ENCODE measurements at regions of chr17 and their contacts with region 1.

Region 1: GRCh38 chr17:57313097-57313835 is 56.9 kb downstream of the MSI2 start:
- DNase-seq: no peak
- ATAC-seq: no peak
- H3K4me3 ChIP-seq: no peak overlapping the region
- H3K27ac ChIP-seq: no peak overlapping the region
- H3K4me1 ChIP-seq: no peaks in the 10 kb centered on the region
- H3K27me3 ChIP-seq: no peaks in the 10 kb centered on the region
- CTCF ChIP-seq: no peak
- EP300 ChIP-seq: no peak
- POLR2A ChIP-seq: no peak
- RAD21 ChIP-seq: no peak

Region 2: GRCh38 chr17:57408071-57408811 is 95.0 kb after region 1 on chr17:
- CTCF ChIA-PET with region 1: no interaction called
- POLR2A ChIA-PET with region 1: interaction called, 11 read pairs
- RAD21 ChIA-PET with region 1: no interaction called
- SMC1A ChIA-PET with region 1: no interaction called
- in situ Hi-C with region 1: no loop called
- intact Hi-C with region 1: no loop called
- DNase-seq: peak; percentile 46
- ATAC-seq: peak; percentile 92
- H3K4me3 ChIP-seq: no peak overlapping the region
- H3K27ac ChIP-seq: peak overlapping the region; percentile 54
- H3K4me1 ChIP-seq: peaks cover 9% of the 10 kb centered on the region
- H3K27me3 ChIP-seq: no peaks in the 10 kb centered on the region
- CTCF ChIP-seq: peak in 1 of 3 experiments; percentile 10; a peak in 1 of 6 replicates
- EP300 ChIP-seq: no peak
- POLR2A ChIP-seq: no peak
- RAD21 ChIP-seq: no peak

Measured in GM12878 (cell line).